MCF 10A (cell line): ENCODE measurements at regions of chr3 and their contacts with region 1.

Region 1: GRCh38 chr3:157088601-157089454 is 71.1 kb downstream of the CCNL1 start:
- DNase-seq: peak; percentile 87
- H3K4me3 Mint-ChIP-seq: peak overlapping the region; percentile 77
- H3K27ac Mint-ChIP-seq: peak overlapping the region; percentile 79
- H3K4me1 Mint-ChIP-seq: peaks cover 28% of the 10 kb centered on the region
- H3K27me3 Mint-ChIP-seq: no peaks in the 10 kb centered on the region
- CTCF ChIP-seq: no peak

Region 2: GRCh38 chr3:156373095-156373494 is 715.7 kb before region 1 on chr3:
- CTCF ChIA-PET with region 1: no interaction called
- POLR2A ChIA-PET with region 1: no interaction called
- intact Hi-C with region 1: no loop called
- DNase-seq: no peak
- H3K4me3 Mint-ChIP-seq: no peak overlapping the region
- H3K27ac Mint-ChIP-seq: no peak overlapping the region
- H3K4me1 Mint-ChIP-seq: no peaks in the 10 kb centered on the region
- H3K27me3 Mint-ChIP-seq: peaks cover 54% of the 10 kb centered on the region
- CTCF ChIP-seq: no peak

Region 3: GRCh38 chr3:156681002-156681401 is 407.8 kb before region 1 on chr3:
- CTCF ChIA-PET with region 1: interaction called, 184 read pairs
- POLR2A ChIA-PET with region 1: interaction called, 134 read pairs
- intact Hi-C with region 1: no loop called
- DNase-seq: peak; percentile 90
- H3K4me3 Mint-ChIP-seq: peak overlapping the region; percentile 43
- H3K27ac Mint-ChIP-seq: peak overlapping the region; percentile 91
- H3K4me1 Mint-ChIP-seq: peaks cover 56% of the 10 kb centered on the region
- H3K27me3 Mint-ChIP-seq: no peaks in the 10 kb centered on the region
- CTCF ChIP-seq: no peak

Region 4: DNA sequence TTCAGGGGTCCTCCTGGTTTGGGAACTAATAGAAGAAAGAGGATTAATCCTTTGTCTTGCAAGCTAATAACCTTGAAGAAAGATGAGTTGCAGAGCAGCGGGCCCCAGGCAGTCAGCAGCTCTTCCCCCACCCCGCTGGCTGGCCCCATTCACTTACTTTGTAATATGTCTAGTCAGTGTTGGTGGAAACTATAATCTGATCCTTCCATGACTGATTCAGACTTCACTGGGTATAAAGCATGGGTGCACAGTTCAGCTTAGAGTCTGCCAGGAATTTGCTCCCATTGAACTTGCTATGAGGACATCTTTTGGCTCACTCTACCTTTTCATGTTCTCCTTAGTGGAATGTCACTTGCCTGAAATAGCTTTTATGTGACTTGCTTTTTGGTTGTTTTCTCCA is 46.6 kb before region 1 on chr3:
- CTCF ChIA-PET with region 1: no interaction called
- POLR2A ChIA-PET with region 1: no interaction called
- intact Hi-C with region 1: no loop called
- DNase-seq: no peak
- H3K4me3 Mint-ChIP-seq: no peak overlapping the region
- H3K27ac Mint-ChIP-seq: no peak overlapping the region
- H3K4me1 Mint-ChIP-seq: no peaks in the 10 kb centered on the region
- H3K27me3 Mint-ChIP-seq: no peaks in the 10 kb centered on the region
- CTCF ChIP-seq: no peak

Region 5: DNA sequence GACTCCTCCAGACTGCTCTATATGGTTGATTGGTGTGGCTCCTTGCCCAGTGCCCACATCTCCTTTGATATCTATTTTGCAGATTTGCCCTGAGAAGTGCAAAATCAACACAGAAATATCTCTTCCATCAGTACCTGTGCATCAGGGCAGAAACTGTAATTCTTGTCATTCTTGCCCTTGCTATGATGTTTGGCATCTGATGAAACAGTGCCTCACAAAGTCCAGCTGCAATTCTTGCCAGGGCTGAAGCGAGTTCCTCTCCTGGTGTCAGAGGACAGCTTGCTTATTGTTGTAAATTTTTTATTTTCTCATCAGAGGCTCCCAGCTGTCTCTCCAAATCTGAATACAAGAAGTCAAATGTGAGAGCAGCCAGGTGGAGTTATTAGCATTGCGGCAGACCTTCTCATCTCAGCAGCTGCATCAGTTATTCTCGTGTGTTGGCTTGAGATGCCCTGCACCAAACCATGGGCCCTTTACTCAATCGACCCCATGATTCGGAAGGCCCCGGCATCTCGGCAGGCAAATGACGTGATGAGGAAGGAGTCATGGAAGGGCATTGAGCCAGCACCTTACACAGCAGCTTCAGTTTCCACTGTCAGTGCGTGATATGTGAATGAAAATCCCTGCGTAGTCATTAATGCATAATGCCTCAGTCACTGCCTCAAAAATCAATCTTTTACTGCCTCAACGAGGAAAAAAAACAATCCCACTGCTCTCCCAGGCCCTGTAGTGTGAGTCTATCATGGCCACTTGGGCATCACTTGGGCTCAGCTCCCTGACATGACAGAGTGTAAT is 22.3 kb before region 1 on chr3:
- CTCF ChIA-PET with region 1: no interaction called
- POLR2A ChIA-PET with region 1: no interaction called
- intact Hi-C with region 1: no loop called
- DNase-seq: no peak
- H3K4me3 Mint-ChIP-seq: no peak overlapping the region
- H3K27ac Mint-ChIP-seq: no peak overlapping the region
- H3K4me1 Mint-ChIP-seq: no peaks in the 10 kb centered on the region
- H3K27me3 Mint-ChIP-seq: no peaks in the 10 kb centered on the region
- CTCF ChIP-seq: no peak

Region 6: DNA sequence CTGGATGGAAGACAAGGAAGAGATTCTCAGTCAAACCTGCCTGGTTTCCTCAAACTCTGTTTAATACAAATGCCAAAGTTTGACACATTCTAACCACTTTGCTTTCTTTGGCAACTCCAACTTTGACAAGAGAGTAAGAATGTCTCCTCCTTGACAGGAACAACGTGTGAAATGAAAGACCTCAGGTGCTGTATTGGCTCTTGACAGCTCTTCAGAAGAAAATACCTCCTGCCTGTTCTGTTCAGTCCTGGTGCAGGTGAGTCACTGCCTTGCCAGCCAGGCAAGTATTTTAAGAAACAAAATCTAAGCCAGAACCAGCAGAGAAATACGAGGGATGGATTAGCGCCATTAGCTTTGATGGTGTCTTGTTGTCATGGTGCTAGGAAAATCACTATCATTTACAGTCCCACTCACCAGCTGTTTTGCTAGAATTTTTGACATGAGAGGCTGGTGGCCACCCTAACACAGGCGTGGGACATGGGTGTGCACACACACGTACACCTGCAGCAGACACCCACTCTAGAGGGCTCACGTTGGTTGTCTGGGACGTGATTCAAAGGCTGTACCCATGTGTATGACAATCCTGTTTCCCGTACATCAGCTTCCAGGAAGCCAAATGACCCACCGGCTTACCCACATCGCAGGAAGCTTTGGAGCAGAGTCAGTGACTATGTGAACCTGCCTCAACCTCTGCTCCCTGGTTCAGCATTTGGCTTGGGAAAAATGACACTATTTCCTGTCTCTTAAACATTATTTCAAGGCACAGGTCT is 10.7 kb after region 1 on chr3:
- CTCF ChIA-PET with region 1: interaction called, 13 read pairs
- POLR2A ChIA-PET with region 1: interaction called, 192 read pairs
- intact Hi-C with region 1: no loop called
- DNase-seq: peak; percentile 71
- H3K4me3 Mint-ChIP-seq: no peak overlapping the region
- H3K27ac Mint-ChIP-seq: peak overlapping the region; percentile 78
- H3K4me1 Mint-ChIP-seq: peaks cover 22% of the 10 kb centered on the region
- H3K27me3 Mint-ChIP-seq: no peaks in the 10 kb centered on the region
- CTCF ChIP-seq: no peak

Region 7: DNA sequence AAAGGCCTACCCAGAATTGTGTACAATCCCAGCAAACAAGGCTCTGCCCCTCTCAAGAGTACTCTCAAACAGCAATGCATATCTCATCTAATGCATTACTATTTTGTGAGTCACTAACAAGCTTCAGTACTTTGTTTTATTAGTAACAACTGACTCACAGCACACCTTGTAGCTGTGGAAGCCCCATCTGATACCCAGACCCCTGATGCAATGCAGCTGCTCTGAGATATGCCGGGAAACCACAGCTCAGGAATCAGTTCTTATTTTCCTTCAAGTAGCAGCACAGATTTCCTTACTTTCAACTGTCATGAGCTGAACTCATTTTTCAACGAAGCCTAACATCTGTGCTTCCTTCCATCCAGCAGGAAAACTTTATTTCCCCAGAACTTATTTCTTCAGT is 33.3 kb after region 1 on chr3:
- CTCF ChIA-PET with region 1: interaction called, 35 read pairs
- POLR2A ChIA-PET with region 1: interaction called, 331 read pairs
- intact Hi-C with region 1: no loop called
- DNase-seq: peak; percentile 80
- H3K4me3 Mint-ChIP-seq: no peak overlapping the region
- H3K27ac Mint-ChIP-seq: peak overlapping the region; percentile 82
- H3K4me1 Mint-ChIP-seq: peaks cover 31% of the 10 kb centered on the region
- H3K27me3 Mint-ChIP-seq: no peaks in the 10 kb centered on the region
- CTCF ChIP-seq: no peak

Region 8: GRCh38 chr3:157174649-157175498 is 86.0 kb after region 1 on chr3:
- CTCF ChIA-PET with region 1: interaction called, 3 read pairs
- POLR2A ChIA-PET with region 1: interaction called, 21 read pairs
- intact Hi-C with region 1: no loop called
- DNase-seq: peak; percentile 99
- H3K4me3 Mint-ChIP-seq: peak overlapping the region; percentile 83
- H3K27ac Mint-ChIP-seq: peak overlapping the region; percentile 98
- H3K4me1 Mint-ChIP-seq: peaks cover 6% of the 10 kb centered on the region
- H3K27me3 Mint-ChIP-seq: no peaks in the 10 kb centered on the region
- CTCF ChIP-seq: no peak

Region 9: GRCh38 chr3:157542711-157543500 is 454.1 kb after region 1 on chr3:
- CTCF ChIA-PET with region 1: no interaction called
- POLR2A ChIA-PET with region 1: no interaction called
- intact Hi-C with region 1: no loop called
- DNase-seq: peak; percentile 32
- H3K4me3 Mint-ChIP-seq: peak overlapping the region; percentile 44
- H3K27ac Mint-ChIP-seq: no peak overlapping the region
- H3K4me1 Mint-ChIP-seq: peaks cover 5% of the 10 kb centered on the region
- H3K27me3 Mint-ChIP-seq: peaks cover 5% of the 10 kb centered on the region
- CTCF ChIP-seq: no peak